Activated naive CD4-positive, alpha-beta T cell treated with anti-CD3 and anti-CD28 coated beads for 36 hours (primary cell): ENCODE measurements at regions of chr16 and their contacts with region 1.

Region 1: GRCh38 chr16:53372992-53373871 is 61.0 kb upstream of the RBL2 start:
- DNase-seq: peak; percentile 89
- H3K4me3 Mint-ChIP-seq: no peak overlapping the region
- H3K27ac Mint-ChIP-seq: peak overlapping the region; percentile 41
- H3K4me1 Mint-ChIP-seq: peaks cover 37% of the 10 kb centered on the region
- H3K27me3 Mint-ChIP-seq: no peaks in the 10 kb centered on the region

Region 2: GRCh38 chr16:53323924-53324323 is 49.3 kb before region 1 on chr16:
- CTCF ChIA-PET with region 1: no interaction called
- intact Hi-C with region 1: no loop called
- DNase-seq: no peak
- H3K4me3 Mint-ChIP-seq: no peak overlapping the region
- H3K27ac Mint-ChIP-seq: no peak overlapping the region
- H3K4me1 Mint-ChIP-seq: no peaks in the 10 kb centered on the region
- H3K27me3 Mint-ChIP-seq: no peaks in the 10 kb centered on the region

Region 3: GRCh38 chr16:53415504-53415903 is 42.3 kb after region 1 on chr16:
- CTCF ChIA-PET with region 1: no interaction called
- intact Hi-C with region 1: no loop called
- DNase-seq: no peak
- H3K4me3 Mint-ChIP-seq: no peak overlapping the region
- H3K27ac Mint-ChIP-seq: no peak overlapping the region
- H3K4me1 Mint-ChIP-seq: peaks cover 10% of the 10 kb centered on the region
- H3K27me3 Mint-ChIP-seq: no peaks in the 10 kb centered on the region

Region 4: DNA sequence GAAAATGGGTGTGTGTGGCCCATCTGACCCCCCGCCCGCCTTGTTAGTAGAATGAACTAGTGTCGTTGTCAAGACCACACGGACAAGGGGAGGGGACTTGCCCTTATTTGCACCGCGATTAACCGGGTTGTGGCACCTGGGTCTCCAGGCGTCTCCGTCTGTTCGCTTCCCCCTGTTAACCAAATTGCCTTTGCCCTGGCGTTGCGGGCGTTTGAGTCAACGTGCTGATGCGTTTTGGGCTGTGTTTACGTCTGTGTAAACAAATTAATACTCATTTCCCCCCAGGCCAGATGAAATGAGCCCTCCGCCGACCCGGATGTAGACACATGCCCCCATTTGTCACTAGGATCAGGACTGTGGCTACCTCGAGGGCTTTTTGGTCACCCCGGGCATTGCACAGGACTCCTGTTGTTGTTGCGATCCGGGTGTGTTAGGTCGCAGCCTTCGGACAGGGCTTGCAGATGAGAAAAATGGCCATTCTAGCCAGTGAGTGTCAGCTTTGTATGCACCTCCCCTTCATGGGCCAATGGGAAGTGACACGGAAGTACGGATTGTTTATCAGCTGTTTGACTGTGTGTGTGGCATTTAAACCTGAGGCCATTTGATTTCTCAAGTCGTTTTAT is 61.9 kb after region 1 on chr16:
- CTCF ChIA-PET with region 1: no interaction called
- intact Hi-C with region 1: loop called (anchors 1 kb)
- DNase-seq: peak; percentile 71
- H3K4me3 Mint-ChIP-seq: peak overlapping the region; percentile 96
- H3K27ac Mint-ChIP-seq: peak overlapping the region; percentile 93
- H3K4me1 Mint-ChIP-seq: peaks cover 36% of the 10 kb centered on the region
- H3K27me3 Mint-ChIP-seq: no peaks in the 10 kb centered on the region

Region 5: GRCh38 chr16:53457670-53458069 is 84.4 kb after region 1 on chr16:
- CTCF ChIA-PET with region 1: no interaction called
- intact Hi-C with region 1: loop called (anchors 1 kb)
- DNase-seq: peak; percentile 87
- H3K4me3 Mint-ChIP-seq: peak overlapping the region; percentile 57
- H3K27ac Mint-ChIP-seq: peak overlapping the region; percentile 94
- H3K4me1 Mint-ChIP-seq: peaks cover 86% of the 10 kb centered on the region
- H3K27me3 Mint-ChIP-seq: no peaks in the 10 kb centered on the region

Region 6: DNA sequence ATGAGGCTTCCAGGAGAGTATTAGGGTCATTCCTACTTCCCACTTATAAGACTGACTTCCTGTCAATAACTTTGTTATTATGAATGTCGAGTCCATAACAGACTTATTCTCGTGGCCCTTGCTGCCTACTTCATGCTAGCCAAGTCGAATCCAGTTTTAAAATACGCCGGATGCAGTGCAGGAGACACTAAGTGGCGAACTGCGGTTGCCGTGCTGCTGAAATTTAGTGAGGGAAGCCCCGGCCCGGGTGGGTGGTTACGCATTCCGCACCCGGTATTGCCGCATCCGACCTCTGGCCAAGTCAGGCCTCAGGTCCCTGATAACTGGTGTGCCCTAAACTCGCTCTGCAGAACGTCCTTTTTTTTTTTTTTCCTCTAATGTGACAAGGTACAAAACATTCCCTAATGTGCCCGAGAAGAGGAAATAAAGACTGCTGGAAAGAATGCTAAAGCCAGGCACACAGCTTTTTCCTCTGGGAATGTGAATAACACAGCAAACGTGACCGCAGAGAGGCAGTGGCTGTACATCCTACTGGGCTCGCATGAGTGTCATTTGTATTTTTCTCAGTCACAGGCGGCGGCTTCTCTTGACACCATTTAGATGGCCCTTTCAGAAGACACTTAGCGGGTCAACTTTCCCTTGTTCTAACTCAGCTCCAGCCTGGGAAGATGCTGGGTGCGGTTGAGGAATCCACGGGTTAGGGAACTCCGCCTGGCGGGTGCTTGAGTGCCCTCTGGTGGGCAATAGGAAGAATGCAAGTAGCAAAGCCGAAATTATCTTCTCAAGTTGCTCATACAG is 136.9 kb after region 1 on chr16:
- CTCF ChIA-PET with region 1: no interaction called
- intact Hi-C with region 1: loop called (anchors 2 kb)
- DNase-seq: peak; percentile 55
- H3K4me3 Mint-ChIP-seq: peak overlapping the region; percentile 10
- H3K27ac Mint-ChIP-seq: no peak overlapping the region
- H3K4me1 Mint-ChIP-seq: peaks cover 18% of the 10 kb centered on the region
- H3K27me3 Mint-ChIP-seq: no peaks in the 10 kb centered on the region

Region 7: GRCh38 chr16:53664724-53665345 is 291.6 kb after region 1 on chr16:
- CTCF ChIA-PET with region 1: no interaction called
- intact Hi-C with region 1: no loop called
- DNase-seq: peak; percentile 38
- H3K4me3 Mint-ChIP-seq: no peak overlapping the region
- H3K27ac Mint-ChIP-seq: no peak overlapping the region
- H3K4me1 Mint-ChIP-seq: peaks cover 11% of the 10 kb centered on the region
- H3K27me3 Mint-ChIP-seq: no peaks in the 10 kb centered on the region

Region 8: DNA sequence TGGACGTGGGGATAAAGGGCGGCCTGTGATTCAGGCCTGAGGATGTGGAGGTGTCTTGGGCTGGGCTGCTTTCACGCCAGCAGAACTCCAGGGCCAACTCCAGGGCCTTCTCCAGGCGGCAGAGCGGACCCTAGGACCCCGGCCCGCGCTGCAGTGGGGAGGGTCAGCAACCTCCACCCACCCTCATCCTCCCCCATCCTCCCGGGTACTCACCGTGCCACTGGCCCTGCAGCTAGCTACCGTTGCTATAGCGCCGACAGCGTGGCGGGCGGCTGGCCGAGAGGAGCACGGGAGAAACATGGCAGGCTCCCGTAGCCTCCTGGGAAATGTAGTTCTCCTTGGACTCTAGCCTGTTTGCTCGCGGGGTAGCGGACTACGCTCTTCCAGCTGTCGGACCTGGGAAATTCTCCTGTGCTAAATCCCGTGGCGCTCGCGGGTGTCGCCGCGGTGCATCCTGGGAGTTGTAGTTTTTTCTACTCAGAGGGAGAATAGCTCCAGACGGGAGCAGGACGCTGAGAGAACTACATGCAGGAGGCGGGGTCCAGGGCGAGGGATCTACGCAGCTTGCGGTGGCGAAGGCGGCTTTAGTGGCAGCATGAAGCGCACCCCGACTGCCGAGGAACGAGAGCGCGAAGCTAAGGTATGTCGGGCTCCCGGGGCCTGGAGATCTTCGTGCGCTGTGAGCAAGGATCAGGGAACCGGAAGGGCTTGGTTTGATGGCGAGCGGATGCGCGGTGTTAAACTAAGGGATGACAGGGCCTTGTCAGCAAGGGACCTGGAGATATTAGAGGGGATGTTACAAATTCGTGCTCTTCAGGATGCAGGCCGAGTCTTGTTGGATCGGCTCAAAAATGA is 330.6 kb after region 1 on chr16 and contains the starts of genes FTO and RPGRIP1L:
- CTCF ChIA-PET with region 1: no interaction called
- intact Hi-C with region 1: loop called (anchors 10 kb)
- DNase-seq: peak; percentile 99
- H3K4me3 Mint-ChIP-seq: peak within 1 kb of the TSS; percentile 100
- H3K27ac Mint-ChIP-seq: peak within 1 kb of the TSS; percentile 89
- H3K4me1 Mint-ChIP-seq: peaks cover 30% of the 10 kb centered on the region
- H3K27me3 Mint-ChIP-seq: no peaks in the 10 kb centered on the region
- total RNA-seq, gene FTO: 60.2 to 63.9 TPM
- total RNA-seq, gene RPGRIP1L: 4.3 to 5.2 TPM